Heart right ventricle (tissue), 16 donors: ENCODE measurements at regions of chr18 and their contacts with region 1.

Region 1: GRCh38 chr18:51498085-51498855 is 300.8 kb upstream of the MEX3C start:
- DNase-seq: peak; percentile 41 to 76
- ATAC-seq: peak; percentile 88 to 98 (median 96)
- H3K4me3 ChIP-seq: no peak overlapping the region
- H3K27ac ChIP-seq: peak overlapping the region in 8 of 10 donors; percentile 58 to 80 (median 68)
- H3K4me1 ChIP-seq: peaks cover 0 to 14% (median 0%) of the 10 kb centered on the region in 9 donors
- H3K27me3 ChIP-seq: no peaks in the 10 kb centered on the region
- CTCF ChIP-seq: no peak

Region 2: GRCh38 chr18:50847192-50847591 is 651.1 kb before region 1 on chr18:
- intact Hi-C with region 1: no loop called
- DNase-seq: no peak
- ATAC-seq: no peak
- H3K4me3 ChIP-seq: no peak overlapping the region
- H3K27ac ChIP-seq: peak overlapping the region in 7 of 10 donors; percentile 17 to 56 (median 23)
- H3K4me1 ChIP-seq: peaks cover 0 to 46% (median 20%) of the 10 kb centered on the region in 9 donors
- H3K27me3 ChIP-seq: no peaks in the 10 kb centered on the region
- CTCF ChIP-seq: no peak

Region 3: DNA sequence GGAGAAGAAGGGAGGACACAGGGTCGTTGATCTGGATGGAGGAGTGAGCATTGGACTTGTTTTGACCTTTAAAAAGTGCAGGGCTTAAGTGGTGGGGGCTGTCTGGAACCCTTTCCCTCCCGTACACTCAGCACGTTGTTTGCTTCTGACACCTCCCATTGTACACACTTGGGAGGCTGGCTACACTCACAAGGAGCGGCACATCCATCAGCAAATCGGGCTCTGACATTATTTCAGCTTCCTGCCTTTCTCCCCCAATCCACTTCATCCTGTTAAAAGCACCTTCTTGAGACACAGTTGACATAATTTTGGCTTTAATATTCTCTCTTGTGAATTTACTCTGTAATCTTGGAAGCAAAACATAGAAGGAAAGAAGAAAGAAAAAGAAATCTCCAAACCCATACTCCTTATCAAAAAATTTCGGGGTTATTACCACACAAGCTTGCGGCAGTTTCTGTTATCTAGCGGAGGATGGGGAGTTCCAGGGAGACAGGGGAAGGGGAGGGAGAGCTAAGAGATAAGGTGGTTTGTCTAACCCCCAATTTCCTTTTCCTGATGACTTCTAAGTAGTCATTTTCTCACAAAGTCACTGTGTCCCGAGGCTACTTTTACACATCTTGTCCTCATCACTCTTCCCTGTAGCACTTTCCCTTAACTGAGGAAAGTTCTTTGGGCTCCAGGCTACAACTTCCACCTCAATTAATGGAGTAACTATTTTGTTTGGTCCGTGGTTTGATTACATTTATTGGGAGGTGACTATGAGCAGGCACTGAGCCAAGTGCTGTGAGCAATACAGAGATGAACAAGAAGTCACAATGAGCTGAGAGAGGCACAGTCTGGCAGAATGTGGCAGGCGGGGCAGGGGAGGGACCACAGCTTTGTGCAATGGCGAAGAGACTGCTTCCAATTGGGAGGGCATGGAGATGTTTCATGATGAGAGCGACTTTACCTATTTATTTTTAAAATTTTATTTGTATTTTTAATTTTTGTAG is 60.7 kb before region 1 on chr18:
- intact Hi-C with region 1: loop called in 1 of 10 experiments (anchors 10 kb)
- DNase-seq: no peak
- ATAC-seq: no peak
- H3K4me3 ChIP-seq: no peak overlapping the region
- H3K27ac ChIP-seq: no peak overlapping the region
- H3K4me1 ChIP-seq: no peaks in the 10 kb centered on the region
- H3K27me3 ChIP-seq: peaks cover 0 to 30% (median 0%) of the 10 kb centered on the region in 7 donors
- CTCF ChIP-seq: no peak

Region 4: GRCh38 chr18:51447351-51448342 is 50.6 kb before region 1 on chr18:
- intact Hi-C with region 1: no loop called
- DNase-seq: peak; percentile 7 to 35
- ATAC-seq: peak; percentile 55 to 95 (median 86)
- H3K4me3 ChIP-seq: no peak overlapping the region
- H3K27ac ChIP-seq: peak overlapping the region in 4 of 10 donors; percentile 21 to 52 (median 43)
- H3K4me1 ChIP-seq: peaks cover 0 to 14% (median 0%) of the 10 kb centered on the region in 9 donors
- H3K27me3 ChIP-seq: no peaks in the 10 kb centered on the region
- CTCF ChIP-seq: no peak

Region 5: DNA sequence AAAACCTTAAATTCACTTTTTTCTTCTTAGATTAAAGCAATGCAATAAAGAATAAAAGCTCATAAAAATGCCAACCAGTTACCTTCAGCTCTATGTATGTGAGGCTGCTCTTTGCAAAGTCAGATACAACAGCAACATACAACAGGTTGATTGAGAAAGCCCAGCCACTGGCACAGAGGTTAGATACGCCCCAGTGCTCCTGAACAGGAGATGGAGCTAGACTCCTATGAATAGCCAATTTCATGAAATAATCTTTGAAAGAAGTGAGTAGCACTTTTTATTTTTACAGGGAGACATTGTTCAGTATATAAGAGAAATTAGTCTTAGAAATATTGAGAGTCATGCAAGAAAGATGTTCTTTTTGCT is 61.6 kb after region 1 on chr18:
- intact Hi-C with region 1: no loop called
- DNase-seq: no peak
- ATAC-seq: no peak
- H3K4me3 ChIP-seq: no peak overlapping the region
- H3K27ac ChIP-seq: no peak overlapping the region
- H3K4me1 ChIP-seq: peaks cover 0 to 4% (median 0%) of the 10 kb centered on the region in 9 donors
- H3K27me3 ChIP-seq: no peaks in the 10 kb centered on the region
- CTCF ChIP-seq: peak in 1 of 9 donors; percentile 13

Region 6: DNA sequence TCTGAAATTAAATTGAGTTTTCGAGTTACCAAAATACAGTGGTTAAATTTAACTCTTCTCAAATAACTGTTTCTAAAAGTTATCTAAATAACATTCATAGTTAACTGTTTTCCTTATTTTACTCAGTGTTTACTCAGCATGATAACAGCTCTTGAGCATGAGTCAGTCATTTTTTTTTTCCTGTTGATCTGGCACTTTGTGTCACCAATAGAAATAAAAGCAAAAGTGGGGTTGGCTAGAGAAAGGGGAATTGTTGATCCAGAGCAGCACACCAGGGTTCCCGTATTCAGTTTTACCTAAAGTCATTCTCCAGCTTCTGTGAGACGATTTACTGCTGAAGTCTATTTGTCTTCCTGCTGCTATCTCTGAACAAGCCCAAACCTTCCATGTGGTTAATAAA is 1693.4 kb after region 1 on chr18:
- intact Hi-C with region 1: no loop called
- DNase-seq: no peak
- ATAC-seq: no peak
- H3K4me3 ChIP-seq: no peak overlapping the region
- H3K27ac ChIP-seq: no peak overlapping the region
- H3K4me1 ChIP-seq: no peaks in the 10 kb centered on the region
- H3K27me3 ChIP-seq: no peaks in the 10 kb centered on the region
- CTCF ChIP-seq: no peak